Dorsolateral prefrontal cortex (tissue), 120 donors: ENCODE measurements at regions of chr3 and their contacts with region 1.

Region 1: DNA sequence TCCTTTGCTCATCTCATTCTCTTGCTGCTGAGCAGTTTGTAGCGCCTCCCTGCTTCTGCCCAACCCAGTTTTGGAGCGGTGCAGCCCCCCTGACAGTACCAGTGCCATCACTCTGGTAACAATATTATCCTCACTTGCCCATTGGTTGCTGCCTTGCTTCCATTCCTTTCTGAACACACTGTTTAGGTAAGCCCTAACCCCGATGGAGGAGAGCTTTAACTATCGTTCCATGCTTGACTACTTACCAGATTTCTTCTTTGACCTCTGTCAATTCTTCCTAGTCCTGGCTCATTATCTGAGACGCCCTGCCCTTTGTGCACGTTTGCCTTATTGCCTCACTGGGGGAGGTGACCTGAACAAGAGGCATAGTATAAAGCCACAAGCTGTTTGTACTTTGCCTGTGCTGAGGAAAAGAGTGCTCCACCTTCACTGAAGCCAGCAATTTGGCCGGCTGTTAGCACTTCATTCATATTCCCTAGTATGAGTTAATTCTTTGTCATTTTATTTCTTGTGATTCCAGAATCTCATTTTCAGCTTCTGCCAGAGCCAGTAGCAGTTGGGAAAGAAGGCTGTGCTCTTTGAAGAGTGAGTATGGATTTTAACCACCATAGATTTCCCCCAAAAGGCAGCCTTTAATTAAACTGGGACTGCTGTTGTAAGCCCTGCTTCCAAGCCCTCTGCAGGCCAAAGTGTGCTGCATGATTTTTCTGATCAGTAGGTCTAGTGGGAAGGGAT is 11.9 kb downstream of the ABHD6 start:
- DNase-seq: no peak
- H3K4me3 ChIP-seq: peak overlapping the region in 1 of 59 donors; percentile 24
- H3K27ac ChIP-seq: peak overlapping the region in 45 of 59 donors; percentile 9 to 71 (median 52)
- H3K27me3 ChIP-seq: no peaks in the 10 kb centered on the region
- CTCF ChIP-seq: peak in 10 of 56 donors; percentile 6 to 30 (median 15)

Region 2: GRCh38 chr3:57778494-57778893 is 471.0 kb before region 1 on chr3:
- intact Hi-C with region 1: no loop called
- DNase-seq: no peak
- H3K4me3 ChIP-seq: no peak overlapping the region
- H3K27ac ChIP-seq: no peak overlapping the region
- H3K27me3 ChIP-seq: no peaks in the 10 kb centered on the region
- CTCF ChIP-seq: no peak

Region 3: DNA sequence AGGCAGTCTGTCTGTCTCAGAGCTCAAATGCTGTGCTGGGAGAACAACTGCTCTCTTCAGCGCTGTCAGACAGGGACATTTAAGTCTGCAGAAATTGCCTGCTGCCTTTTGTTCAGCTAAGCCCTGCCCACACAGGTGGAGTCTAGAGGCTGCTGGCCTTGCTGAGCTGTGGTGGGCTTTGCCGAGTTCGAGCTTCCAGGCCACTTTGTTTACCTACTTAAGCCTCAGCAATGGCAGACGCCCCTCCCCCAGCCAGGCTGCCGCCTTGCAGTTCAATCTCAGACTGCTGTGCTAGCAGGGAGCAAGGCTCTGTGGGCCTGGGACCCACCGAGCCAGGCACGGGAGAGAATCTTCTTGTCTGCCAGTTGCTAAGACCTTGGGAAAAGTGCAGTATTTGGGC is 31.5 kb after region 1 on chr3:
- intact Hi-C with region 1: loop called in 1 of 2 experiments (anchors 5 kb)
- DNase-seq: no peak
- H3K4me3 ChIP-seq: no peak overlapping the region
- H3K27ac ChIP-seq: peak overlapping the region in 19 of 59 donors; percentile 2 to 61 (median 32)
- H3K27me3 ChIP-seq: no peaks in the 10 kb centered on the region
- CTCF ChIP-seq: no peak